Esophagus squamous epithelium (tissue), 5 donors: ENCODE measurements at regions of chr17 and their contacts with region 1.

Region 1: GRCh38 chr17:7589891-7590691 is at the start of gene SOX15:
- DNase-seq: no peak
- H3K4me3 ChIP-seq: peak within 1 kb of the TSS; percentile 64 to 76 (median 68)
- H3K27ac ChIP-seq: peak within 1 kb of the TSS; percentile 90 to 96 (median 96)
- H3K4me1 ChIP-seq: peaks cover 23 to 65% (median 32%) of the 10 kb centered on the region in 3 donors
- H3K27me3 ChIP-seq: no peaks in the 10 kb centered on the region
- CTCF ChIP-seq: no peak
- POLR2A ChIP-seq: peak in 2 of 4 donors; percentile 50 to 74
- total RNA-seq, gene SOX15: 89.1 to 127 (median 103) TPM

Region 2: DNA sequence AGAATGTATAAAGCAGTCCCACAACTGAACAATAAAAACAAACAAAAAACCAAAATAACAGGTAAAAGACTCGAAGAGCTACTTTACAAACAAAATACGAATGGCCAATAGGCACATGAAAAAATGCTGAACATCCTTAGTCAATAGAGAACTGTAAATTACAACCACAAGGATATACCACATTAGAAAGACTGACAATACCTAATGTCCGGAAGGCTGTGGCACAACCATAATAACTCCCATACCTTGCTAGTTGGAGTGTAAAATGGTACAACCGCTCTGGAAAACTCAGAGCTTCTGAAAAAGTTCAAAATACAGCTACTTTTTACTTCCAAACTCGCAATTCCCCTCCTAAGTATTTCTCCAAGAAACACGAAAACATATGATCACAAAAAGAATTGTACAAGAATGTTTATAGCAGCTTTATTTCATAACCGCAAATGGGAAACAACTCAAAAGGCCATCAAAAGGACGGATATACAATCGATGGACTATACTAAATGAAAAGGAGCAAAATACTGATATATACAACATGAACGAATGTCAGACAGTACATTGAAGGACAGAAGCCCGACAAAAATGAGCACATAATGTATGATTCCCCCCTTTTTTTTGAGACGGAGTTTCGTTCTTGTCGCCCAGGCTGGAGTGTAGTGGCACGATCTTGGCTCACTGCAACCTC is 94.9 kb after region 1 on chr17:
- intact Hi-C with region 1: loop called (anchors 5 kb)
- DNase-seq: no peak
- H3K4me3 ChIP-seq: peak overlapping the region; percentile 63 to 87 (median 78)
- H3K27ac ChIP-seq: peak overlapping the region; percentile 93 to 97 (median 94)
- H3K4me1 ChIP-seq: peaks cover 9 to 45% (median 24%) of the 10 kb centered on the region in 3 donors
- H3K27me3 ChIP-seq: no peaks in the 10 kb centered on the region
- CTCF ChIP-seq: no peak
- POLR2A ChIP-seq: no peak

Region 3: DNA sequence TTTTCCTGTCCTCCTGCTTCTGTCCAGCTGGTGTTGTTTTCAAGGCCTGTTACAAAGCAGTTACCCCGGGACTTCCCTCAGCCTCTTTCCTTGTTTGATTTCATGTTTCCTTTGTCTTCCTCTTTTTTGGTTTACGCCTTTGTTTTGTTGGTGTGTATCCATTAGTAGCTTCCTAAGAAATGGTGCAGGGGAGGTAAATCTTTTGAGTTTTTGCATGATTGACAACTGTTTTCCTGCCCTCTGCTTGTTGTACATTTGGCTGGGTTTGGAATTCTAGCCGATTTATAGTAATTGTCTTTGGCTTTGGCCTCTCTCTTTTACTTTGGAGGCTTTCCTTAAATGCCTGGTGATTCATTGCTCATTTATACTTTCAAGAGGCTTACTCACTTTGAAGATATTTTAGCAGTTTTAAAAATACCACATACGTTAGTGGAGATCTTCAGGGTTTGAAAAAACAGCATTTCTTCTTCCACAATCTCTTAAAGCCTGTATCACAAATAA is 160.3 kb after region 1 on chr17:
- intact Hi-C with region 1: no loop called
- DNase-seq: no peak
- H3K4me3 ChIP-seq: no peak overlapping the region
- H3K27ac ChIP-seq: no peak overlapping the region
- H3K4me1 ChIP-seq: peaks cover 0 to 20% (median 1%) of the 10 kb centered on the region in 3 donors
- H3K27me3 ChIP-seq: no peaks in the 10 kb centered on the region
- CTCF ChIP-seq: no peak
- POLR2A ChIP-seq: no peak